Caco-2 (cell line): ENCODE measurements at regions of chr2 and their contacts with region 1.

Region 1: GRCh38 chr2:223306371-223306770 is 254.4 kb downstream of the KCNE4 start:
- DNase-seq: peak in 1 of 2 experiments; percentile 36
- H3K4me3 ChIP-seq: no peak overlapping the region
- H3K4me3 Mint-ChIP-seq: no peak overlapping the region
- H3K27ac Mint-ChIP-seq: no peak overlapping the region
- H3K4me1 ChIP-seq: no peaks in the 10 kb centered on the region
- H3K4me1 Mint-ChIP-seq: no peaks in the 10 kb centered on the region
- H3K27me3 ChIP-seq: no peaks in the 10 kb centered on the region; the same call in 1 of the 2 replicates
- H3K27me3 Mint-ChIP-seq: peaks cover 3% of the 10 kb centered on the region
- CTCF ChIP-seq: peak; percentile 71 to 74

Region 2: DNA sequence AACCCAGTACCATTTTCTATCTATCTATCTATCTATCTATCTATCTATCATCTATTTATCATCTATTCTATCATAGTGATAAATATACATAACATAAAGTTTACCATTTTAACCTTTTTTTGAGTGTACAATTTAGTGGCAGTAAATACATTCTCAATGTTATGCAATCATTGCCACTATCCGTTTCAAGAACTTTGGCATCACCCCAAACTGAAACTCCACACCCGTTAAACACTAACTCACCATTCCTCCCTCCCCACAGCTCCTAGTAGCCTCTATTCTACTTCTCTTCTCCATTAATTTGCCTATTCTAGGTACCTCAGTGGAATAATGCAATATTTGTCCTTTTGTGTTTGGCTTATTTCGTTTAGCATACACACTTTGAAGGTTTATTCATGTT is 336.9 kb before region 1 on chr2:
- CTCF ChIA-PET with region 1: interaction called, 4 read pairs
- POLR2A ChIA-PET with region 1: no interaction called
- intact Hi-C with region 1: loop called (anchors 1 kb)
- DNase-seq: no peak
- H3K4me3 ChIP-seq: no peak overlapping the region
- H3K4me3 Mint-ChIP-seq: no peak overlapping the region
- H3K27ac Mint-ChIP-seq: no peak overlapping the region
- H3K4me1 ChIP-seq: no peaks in the 10 kb centered on the region
- H3K4me1 Mint-ChIP-seq: no peaks in the 10 kb centered on the region
- H3K27me3 ChIP-seq: no peaks in the 10 kb centered on the region
- H3K27me3 Mint-ChIP-seq: peaks cover 3% of the 10 kb centered on the region
- CTCF ChIP-seq: no peak

Region 3: GRCh38 chr2:223383315-223383714 is 76.9 kb after region 1 on chr2:
- CTCF ChIA-PET with region 1: no interaction called
- POLR2A ChIA-PET with region 1: no interaction called
- intact Hi-C with region 1: no loop called
- DNase-seq: no peak
- H3K4me3 ChIP-seq: no peak overlapping the region
- H3K4me3 Mint-ChIP-seq: no peak overlapping the region
- H3K27ac Mint-ChIP-seq: no peak overlapping the region
- H3K4me1 ChIP-seq: no peaks in the 10 kb centered on the region
- H3K4me1 Mint-ChIP-seq: no peaks in the 10 kb centered on the region
- H3K27me3 ChIP-seq: no peaks in the 10 kb centered on the region
- H3K27me3 Mint-ChIP-seq: peaks cover 19% of the 10 kb centered on the region
- CTCF ChIP-seq: no peak

Region 4: GRCh38 chr2:223414646-223415045 is 108.3 kb after region 1 on chr2:
- CTCF ChIA-PET with region 1: no interaction called
- POLR2A ChIA-PET with region 1: no interaction called
- intact Hi-C with region 1: no loop called
- DNase-seq: no peak
- H3K4me3 ChIP-seq: no peak overlapping the region
- H3K4me3 Mint-ChIP-seq: no peak overlapping the region
- H3K27ac Mint-ChIP-seq: no peak overlapping the region
- H3K4me1 ChIP-seq: no peaks in the 10 kb centered on the region
- H3K4me1 Mint-ChIP-seq: no peaks in the 10 kb centered on the region
- H3K27me3 ChIP-seq: no peaks in the 10 kb centered on the region
- H3K27me3 Mint-ChIP-seq: peaks cover 20% of the 10 kb centered on the region
- CTCF ChIP-seq: no peak